Common myeloid progenitor, CD34-positive (primary cell): ENCODE measurements at regions of chr6 and their contacts with region 1.

Region 1: GRCh38 chr6:36615018-36615761 is 21.0 kb downstream of the SRSF3 start:
- DNase-seq: peak; percentile 61 to 83 (median 77)
- H3K4me3 ChIP-seq: no peak overlapping the region
- H3K27ac ChIP-seq: no peak overlapping the region
- H3K4me1 ChIP-seq: peaks cover 0 to 11% (median 3%) of the 10 kb centered on the region in 4 experiments
- H3K27me3 ChIP-seq: no peaks in the 10 kb centered on the region

Region 2: GRCh38 chr6:36586606-36587005 is 28.6 kb before region 1 on chr6:
- CTCF ChIA-PET with region 1: no interaction called
- POLR2A ChIA-PET with region 1: no interaction called
- DNase-seq: no peak
- H3K4me3 ChIP-seq: no peak overlapping the region
- H3K27ac ChIP-seq: no peak overlapping the region
- H3K4me1 ChIP-seq: peaks cover 0 to 3% (median 0%) of the 10 kb centered on the region in 4 experiments
- H3K27me3 ChIP-seq: peaks cover 0 to 2% (median 0%) of the 10 kb centered on the region in 5 experiments

Region 3: GRCh38 chr6:36599791-36600209 is 15.4 kb before region 1 on chr6:
- CTCF ChIA-PET with region 1: interaction called, 22 read pairs
- POLR2A ChIA-PET with region 1: no interaction called
- DNase-seq: peak in 2 of 3 donors; percentile 52 to 60
- H3K4me3 ChIP-seq: no peak overlapping the region
- H3K27ac ChIP-seq: no peak overlapping the region
- H3K4me1 ChIP-seq: peaks cover 19 to 47% (median 30%) of the 10 kb centered on the region in 4 experiments
- H3K27me3 ChIP-seq: no peaks in the 10 kb centered on the region

Region 4: GRCh38 chr6:36703982-36704381 is 88.8 kb after region 1 on chr6:
- CTCF ChIA-PET with region 1: interaction called, 11 read pairs
- POLR2A ChIA-PET with region 1: no interaction called
- DNase-seq: no peak
- H3K4me3 ChIP-seq: no peak overlapping the region
- H3K27ac ChIP-seq: no peak overlapping the region
- H3K4me1 ChIP-seq: peaks cover 6 to 26% (median 12%) of the 10 kb centered on the region in 4 experiments
- H3K27me3 ChIP-seq: no peaks in the 10 kb centered on the region

Region 5: DNA sequence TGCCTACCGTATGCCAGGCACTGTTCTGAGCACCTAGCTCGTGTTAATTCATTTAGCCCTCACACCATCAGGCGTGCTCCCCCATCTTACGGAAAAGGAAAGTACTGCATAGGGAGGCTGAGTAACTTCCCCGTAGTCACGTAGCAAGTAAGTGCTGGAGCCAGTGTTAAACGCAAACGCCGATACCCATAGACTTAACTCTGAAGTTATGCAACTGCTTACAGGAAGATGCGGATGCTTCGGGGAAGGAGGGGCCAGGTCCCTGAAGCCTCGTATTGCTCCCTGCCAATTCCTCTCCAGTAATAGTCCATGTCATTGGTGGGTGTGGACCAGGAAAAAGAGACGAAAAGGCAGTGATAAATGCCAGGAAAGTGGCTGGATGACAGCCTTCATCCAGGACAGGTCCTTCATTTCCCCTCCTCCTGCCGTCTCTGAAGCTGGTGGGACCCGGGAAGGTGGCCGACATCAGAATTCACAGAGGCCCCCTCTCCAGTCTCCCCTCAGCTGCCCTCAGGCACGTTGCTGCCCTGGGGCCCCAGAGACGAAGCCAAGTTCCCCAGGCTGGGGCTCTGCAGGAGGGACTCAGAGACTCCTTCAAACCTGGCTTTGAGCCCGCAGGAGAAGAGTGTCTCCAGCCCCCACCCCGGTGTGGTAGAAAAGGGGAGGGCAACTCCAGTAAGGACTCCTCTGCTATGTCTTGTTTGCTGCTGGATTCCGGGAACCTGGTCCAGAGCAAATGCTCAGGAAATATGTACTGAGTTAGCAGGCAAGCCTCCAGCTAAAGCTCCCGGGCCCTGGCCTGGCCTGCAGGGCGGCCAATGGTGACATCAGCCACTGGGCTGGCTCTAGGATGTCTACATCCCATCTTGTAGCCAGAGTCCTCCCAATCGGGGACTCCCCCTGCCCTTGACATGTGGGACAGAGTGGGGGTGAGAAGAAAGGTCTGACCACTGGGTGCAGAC is 120.2 kb after region 1 on chr6:
- CTCF ChIA-PET with region 1: interaction called, 22 read pairs
- POLR2A ChIA-PET with region 1: no interaction called
- DNase-seq: peak; percentile 67 to 86 (median 85)
- H3K4me3 ChIP-seq: peak overlapping the region in 3 of 7 experiments; percentile 40 to 63 (median 59)
- H3K27ac ChIP-seq: no peak overlapping the region
- H3K4me1 ChIP-seq: peaks cover 0 to 12% (median 10%) of the 10 kb centered on the region in 4 experiments
- H3K27me3 ChIP-seq: peaks cover 0 to 1% (median 0%) of the 10 kb centered on the region in 5 experiments

Region 6: GRCh38 chr6:36765594-36766398 is 150.6 kb after region 1 on chr6:
- CTCF ChIA-PET with region 1: interaction called, 71 read pairs
- POLR2A ChIA-PET with region 1: no interaction called
- DNase-seq: peak; percentile 85 to 91 (median 87)
- H3K4me3 ChIP-seq: no peak overlapping the region
- H3K27ac ChIP-seq: no peak overlapping the region
- H3K4me1 ChIP-seq: peaks cover 5 to 27% (median 21%) of the 10 kb centered on the region in 4 experiments
- H3K27me3 ChIP-seq: no peaks in the 10 kb centered on the region